Right cardiac atrium (tissue), 5 donors: ENCODE measurements at regions of chr20 and their contacts with region 1.

Region 1: GRCh38 chr20:24917797-24918578 is 31.1 kb upstream of the CST7 start:
- DNase-seq: peak; percentile 71 to 90 (median 88)
- ATAC-seq: peak; percentile 88 to 90
- H3K4me3 ChIP-seq: no peak overlapping the region
- H3K27ac ChIP-seq: no peak overlapping the region
- H3K4me1 ChIP-seq: no peaks in the 10 kb centered on the region
- H3K27me3 ChIP-seq: no peaks in the 10 kb centered on the region

Region 2: DNA sequence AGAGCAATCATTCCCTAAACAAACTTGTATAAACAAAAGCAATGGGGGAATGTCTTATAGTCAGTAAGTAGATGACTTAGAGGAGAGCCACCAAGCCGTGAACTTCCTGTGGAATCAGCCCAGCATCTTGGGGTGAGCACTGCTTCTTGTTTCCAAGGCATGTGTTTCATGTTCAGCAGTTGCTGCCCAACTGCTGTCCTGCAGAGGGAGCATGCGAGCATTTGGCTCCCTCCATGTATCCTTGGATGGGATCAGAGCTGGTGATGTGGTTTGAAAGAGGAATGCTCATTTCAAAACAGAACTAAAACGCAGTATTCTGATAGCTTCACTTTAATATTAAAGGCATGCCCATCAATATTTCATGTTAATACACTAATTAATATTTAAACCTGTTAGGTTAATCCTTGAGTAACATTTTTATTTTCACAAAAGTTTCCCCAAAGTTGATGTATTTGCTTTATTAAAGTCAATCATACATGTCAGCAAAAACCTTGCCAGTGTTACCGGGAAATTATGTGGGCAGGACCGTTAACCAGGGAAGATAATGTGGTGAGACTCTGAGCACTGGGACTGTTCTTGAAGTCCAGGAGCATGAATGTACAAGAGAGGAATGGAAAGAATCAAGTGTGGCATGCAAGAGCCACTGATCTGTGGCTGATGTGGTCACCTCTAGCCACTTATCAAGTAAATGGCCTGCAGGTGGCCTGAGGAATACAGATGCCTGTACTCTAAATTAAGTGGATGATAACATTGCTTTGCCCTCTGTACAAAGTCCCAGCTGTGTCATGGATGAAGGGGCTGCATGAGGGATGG is 757.2 kb before region 1 on chr20:
- intact Hi-C with region 1: loop called in 3 of 4 experiments (anchors 5 to 10 kb)
- DNase-seq: peak; percentile 44 to 83 (median 73)
- ATAC-seq: peak; percentile 63 to 72
- H3K4me3 ChIP-seq: no peak overlapping the region
- H3K27ac ChIP-seq: no peak overlapping the region
- H3K4me1 ChIP-seq: no peaks in the 10 kb centered on the region
- H3K27me3 ChIP-seq: no peaks in the 10 kb centered on the region

Region 3: GRCh38 chr20:24303381-24303780 is 614.6 kb before region 1 on chr20:
- intact Hi-C with region 1: loop called in 1 of 4 experiments (anchors 10 kb)
- DNase-seq: no peak
- ATAC-seq: peak; percentile 39 to 52
- H3K4me3 ChIP-seq: no peak overlapping the region
- H3K27ac ChIP-seq: no peak overlapping the region
- H3K4me1 ChIP-seq: no peaks in the 10 kb centered on the region
- H3K27me3 ChIP-seq: no peaks in the 10 kb centered on the region

Region 4: DNA sequence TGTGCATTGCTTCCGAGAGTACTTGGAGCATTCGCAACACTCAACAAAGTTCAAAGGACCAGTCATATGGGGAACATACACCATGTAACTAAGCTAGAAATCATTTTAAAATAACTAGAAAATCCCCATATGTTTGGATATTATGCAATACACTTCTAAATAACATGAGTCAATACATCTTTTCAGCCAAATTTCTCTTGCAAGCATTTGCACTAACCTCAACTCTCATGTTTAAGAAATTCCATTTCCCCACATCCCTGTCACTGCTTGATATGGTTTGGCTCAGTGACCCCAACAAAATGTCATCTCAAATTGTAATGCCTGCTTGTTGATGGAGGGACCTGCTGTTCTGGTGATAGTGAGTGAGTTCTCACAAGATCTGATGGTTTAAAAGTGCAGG is 54.6 kb before region 1 on chr20:
- intact Hi-C with region 1: no loop called
- DNase-seq: no peak
- ATAC-seq: no peak
- H3K4me3 ChIP-seq: no peak overlapping the region
- H3K27ac ChIP-seq: no peak overlapping the region
- H3K4me1 ChIP-seq: no peaks in the 10 kb centered on the region
- H3K27me3 ChIP-seq: no peaks in the 10 kb centered on the region